A673 (cell line): ENCODE measurements at regions of chr3 and their contacts with region 1.

Region 1: DNA sequence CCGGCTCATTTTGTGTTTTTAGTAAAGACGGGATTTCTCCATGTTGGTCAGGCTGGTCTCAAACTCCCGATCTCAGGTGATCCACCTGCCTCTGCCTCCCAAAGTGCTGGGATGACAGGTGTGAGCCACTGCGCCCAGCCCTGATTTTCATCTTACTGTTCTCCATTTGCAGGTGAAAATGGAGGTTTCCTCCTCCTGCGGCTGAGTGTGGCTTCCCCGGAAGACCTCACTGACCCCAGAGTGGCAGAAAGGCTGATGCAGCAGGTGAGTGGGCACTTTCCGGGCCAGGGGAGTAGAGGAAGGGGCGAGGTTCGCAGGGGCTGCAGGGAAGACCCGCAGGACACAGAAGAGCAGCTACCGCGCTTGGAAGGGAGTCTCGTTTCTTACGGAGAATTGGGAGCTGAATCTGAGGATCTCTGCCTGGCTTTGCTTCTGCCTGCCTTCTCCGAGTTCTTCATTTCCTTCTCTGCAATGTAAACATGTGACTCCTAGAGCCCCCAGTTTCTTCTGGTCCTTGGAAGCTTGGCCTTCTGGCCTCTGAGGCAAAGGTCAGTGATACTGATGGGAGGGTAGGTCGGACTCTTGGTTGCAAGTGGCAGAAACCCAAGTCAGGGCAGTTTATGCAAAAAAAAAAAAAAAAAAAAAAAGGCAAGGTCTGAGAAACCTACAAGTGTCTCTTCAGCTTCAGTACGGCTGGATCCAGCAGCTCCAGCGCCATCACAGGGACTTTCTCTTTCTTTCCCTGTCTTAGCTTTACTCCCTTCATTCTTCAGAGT is 8.9 kb downstream of the MUC20 start:
- DNase-seq: no peak
- H3K4me3 ChIP-seq: no peak overlapping the region
- H3K27ac ChIP-seq: no peak overlapping the region
- H3K4me1 ChIP-seq: no peaks in the 10 kb centered on the region
- H3K27me3 ChIP-seq: no peaks in the 10 kb centered on the region
- CTCF ChIP-seq: no peak

Region 2: GRCh38 chr3:195524171-195524896 is 205.3 kb before region 1 on chr3:
- CTCF ChIA-PET with region 1: no interaction called
- POLR2A ChIA-PET with region 1: no interaction called
- intact Hi-C with region 1: no loop called
- DNase-seq: no peak
- H3K4me3 ChIP-seq: no peak overlapping the region
- H3K27ac ChIP-seq: no peak overlapping the region
- H3K4me1 ChIP-seq: no peaks in the 10 kb centered on the region
- H3K27me3 ChIP-seq: no peaks in the 10 kb centered on the region
- CTCF ChIP-seq: no peak

Region 3: GRCh38 chr3:195697582-195698301 is 31.9 kb before region 1 on chr3:
- CTCF ChIA-PET with region 1: no interaction called
- POLR2A ChIA-PET with region 1: no interaction called
- intact Hi-C with region 1: no loop called
- DNase-seq: peak; percentile 53
- H3K4me3 ChIP-seq: no peak overlapping the region
- H3K27ac ChIP-seq: peak overlapping the region; percentile 6
- H3K4me1 ChIP-seq: peaks cover 10% of the 10 kb centered on the region
- H3K27me3 ChIP-seq: no peaks in the 10 kb centered on the region
- CTCF ChIP-seq: no peak

Region 4: DNA sequence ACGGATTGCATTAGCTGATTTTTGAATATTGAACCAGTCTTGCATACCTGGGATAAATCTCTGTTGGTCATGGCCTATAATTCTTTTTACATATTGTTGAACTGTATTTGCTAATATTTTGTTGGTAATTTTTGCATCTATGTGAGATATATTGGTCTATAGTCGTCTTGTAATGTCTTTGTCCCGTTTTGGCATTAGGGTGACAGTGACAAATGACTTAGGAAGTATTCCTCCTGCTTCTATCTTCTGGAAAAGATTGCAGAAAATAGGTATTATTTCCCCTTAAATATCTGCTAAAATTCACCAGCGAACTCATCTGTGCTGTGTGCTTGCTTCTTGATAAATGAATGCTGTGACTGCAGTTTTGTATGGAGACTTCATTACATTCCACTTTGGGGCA is 14.8 kb after region 1 on chr3:
- CTCF ChIA-PET with region 1: no interaction called
- POLR2A ChIA-PET with region 1: no interaction called
- intact Hi-C with region 1: loop called (anchors 1 kb)
- DNase-seq: no peak
- H3K4me3 ChIP-seq: no peak overlapping the region
- H3K27ac ChIP-seq: no peak overlapping the region
- H3K4me1 ChIP-seq: no peaks in the 10 kb centered on the region
- H3K27me3 ChIP-seq: no peaks in the 10 kb centered on the region
- CTCF ChIP-seq: no peak